ENCODE measurements at regions of chr2 and their contacts with region 1.

Region 1: GRCh38 chr2:147937744-147938349 is 82.7 kb downstream of the ORC4 start:
- H3K4me3 Mint-ChIP-seq: no peak overlapping the region
- H3K27ac Mint-ChIP-seq: no peak overlapping the region
- H3K4me1 Mint-ChIP-seq: no peaks in the 10 kb centered on the region
- H3K27me3 Mint-ChIP-seq: no peaks in the 10 kb centered on the region

Region 2: DNA sequence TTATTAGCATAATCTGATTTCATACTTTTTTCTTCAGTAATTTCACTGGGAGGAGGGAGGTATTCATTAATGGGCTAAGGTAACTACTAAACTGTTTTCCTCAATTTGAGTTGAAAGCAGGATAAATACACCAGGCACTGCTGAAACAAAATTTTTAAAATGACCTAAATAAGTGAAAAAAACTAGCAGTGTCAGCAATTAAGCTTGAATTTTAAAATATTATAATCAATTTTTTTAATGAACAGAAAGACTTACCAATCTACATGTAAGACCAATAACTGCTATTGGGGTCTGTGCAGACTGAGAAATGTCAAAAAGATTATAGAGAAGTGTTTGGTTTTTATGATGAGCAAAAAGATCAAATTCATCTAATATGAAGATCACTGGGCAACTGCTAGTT is 14.3 kb after region 1 on chr2:
- intact Hi-C with region 1: no loop called
- H3K4me3 Mint-ChIP-seq: no peak overlapping the region
- H3K27ac Mint-ChIP-seq: no peak overlapping the region
- H3K4me1 Mint-ChIP-seq: no peaks in the 10 kb centered on the region
- H3K27me3 Mint-ChIP-seq: no peaks in the 10 kb centered on the region

Region 3: GRCh38 chr2:148509288-148509902 is 571.5 kb after region 1 on chr2:
- intact Hi-C with region 1: loop called (anchors 2 kb)
- H3K4me3 Mint-ChIP-seq: peak overlapping the region; percentile 66
- H3K27ac Mint-ChIP-seq: no peak overlapping the region
- H3K4me1 Mint-ChIP-seq: peaks cover 8% of the 10 kb centered on the region
- H3K27me3 Mint-ChIP-seq: no peaks in the 10 kb centered on the region

Region 4: GRCh38 chr2:149525323-149525722 is 1587.5 kb after region 1 on chr2:
- intact Hi-C with region 1: no loop called
- H3K4me3 Mint-ChIP-seq: no peak overlapping the region
- H3K27ac Mint-ChIP-seq: no peak overlapping the region
- H3K4me1 Mint-ChIP-seq: no peaks in the 10 kb centered on the region
- H3K27me3 Mint-ChIP-seq: no peaks in the 10 kb centered on the region

Measured in dendritic cell treated with granulocyte-macrophage colony-stimulating factor and Interleukin-4, amounts not matched to agents 40 ng/mL and 50 ng/mL, for 4 days (primary cell).